ENCODE measurements at regions of chr9 and their contacts with region 1.

Region 1: DNA sequence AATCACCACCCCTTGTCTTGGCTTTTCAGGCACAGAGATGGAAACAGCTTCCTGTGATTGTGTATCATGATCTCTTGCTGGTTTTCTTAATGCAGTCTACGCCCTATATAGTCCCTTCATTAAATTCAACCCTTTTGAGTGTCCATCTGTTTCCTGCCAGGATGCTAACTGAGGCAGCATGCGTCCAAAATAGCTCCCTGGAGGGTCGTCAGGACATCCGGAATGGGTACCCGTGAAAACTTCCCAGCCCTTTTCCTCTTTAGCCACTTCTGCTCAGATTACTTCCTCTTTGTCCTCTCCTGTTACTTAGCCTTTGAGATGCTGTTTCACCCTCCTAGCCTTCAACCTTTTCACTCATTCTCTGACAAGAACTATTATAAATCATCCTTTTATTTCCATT is 79.8 kb upstream of the KLF9 start:
- DNase-seq: no peak
- H3K4me3 ChIP-seq: no peak overlapping the region
- H3K27ac ChIP-seq: peak overlapping the region in 2 of 3 donors; percentile 14 to 33
- H3K4me1 ChIP-seq: peaks cover 4 to 10% of the 10 kb centered on the region in 2 donors
- H3K27me3 ChIP-seq: no peaks in the 10 kb centered on the region
- CTCF ChIP-seq: no peak
- POLR2A ChIP-seq: no peak

Region 2: DNA sequence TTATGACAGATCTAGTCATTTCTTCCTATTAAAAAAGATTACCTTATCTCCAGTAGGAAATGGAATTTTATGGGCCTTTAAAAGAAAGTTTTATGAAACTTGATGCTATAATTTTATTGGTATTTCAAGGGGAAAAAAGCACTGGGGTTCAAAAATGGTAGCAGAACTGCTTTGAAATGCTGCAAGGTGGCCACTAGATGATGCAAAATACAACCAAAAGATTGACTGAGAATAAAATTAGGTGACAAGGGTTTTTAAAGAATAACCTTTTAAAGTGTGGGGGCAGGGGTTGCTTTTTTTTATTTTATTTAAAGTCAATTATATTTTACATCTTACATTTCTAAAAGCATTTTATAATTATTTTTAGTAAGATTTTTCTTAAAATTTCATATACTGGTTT is 141.4 kb before region 1 on chr9:
- intact Hi-C with region 1: loop called (anchors 10 kb)
- DNase-seq: no peak
- H3K4me3 ChIP-seq: no peak overlapping the region
- H3K27ac ChIP-seq: no peak overlapping the region
- H3K4me1 ChIP-seq: no peaks in the 10 kb centered on the region
- H3K27me3 ChIP-seq: no peaks in the 10 kb centered on the region
- CTCF ChIP-seq: peak; percentile 47 to 85 (median 70)
- POLR2A ChIP-seq: no peak

Region 3: GRCh38 chr9:70589571-70590314 is 95.5 kb after region 1 on chr9:
- intact Hi-C with region 1: loop called (anchors 10 kb)
- DNase-seq: no peak
- H3K4me3 ChIP-seq: no peak overlapping the region
- H3K27ac ChIP-seq: peak overlapping the region; percentile 65 to 73 (median 69)
- H3K4me1 ChIP-seq: peaks cover 7 to 21% of the 10 kb centered on the region in 2 donors
- H3K27me3 ChIP-seq: no peaks in the 10 kb centered on the region
- CTCF ChIP-seq: no peak
- POLR2A ChIP-seq: no peak